ENCODE measurements at regions of chr16 and their contacts with region 1.

Region 1: GRCh38 chr16:87702325-87702811 is 63.4 kb downstream of the KLHDC4 start:
- DNase-seq: peak in 1 of 2 experiments; percentile 80
- H3K4me3 ChIP-seq: no peak overlapping the region
- H3K27ac ChIP-seq: no peak overlapping the region
- H3K4me1 ChIP-seq: peaks cover 0 to 3% (median 0%) of the 10 kb centered on the region in 4 experiments; a peak in 2 of 7 replicates
- H3K27me3 ChIP-seq: no peaks in the 10 kb centered on the region
- CTCF ChIP-seq: peak; percentile 77 to 80 (median 77)
- EP300 ChIP-seq: no peak
- POLR2A ChIP-seq: no peak
- RAD21 ChIP-seq: peak; percentile 46 to 58

Region 2: GRCh38 chr16:87492721-87493607 is 209.4 kb before region 1 on chr16 and contains the start of gene ZCCHC14:
- CTCF ChIA-PET with region 1: no interaction called
- POLR2A ChIA-PET with region 1: no interaction called
- DNase-seq: peak; percentile 90 to 100
- H3K4me3 ChIP-seq: peak within 1 kb of the TSS; percentile 37 to 60 (median 50)
- H3K27ac ChIP-seq: no peak within 1 kb of the TSS
- H3K4me1 ChIP-seq: peaks cover 6 to 17% (median 9%) of the 10 kb centered on the region in 4 experiments
- H3K27me3 ChIP-seq: no peaks in the 10 kb centered on the region; a peak in 1 of 7 replicates
- CTCF ChIP-seq: no peak
- EP300 ChIP-seq: peak in 1 of 2 experiments; percentile 17; a peak in 1 of 3 replicates
- POLR2A ChIP-seq: no peak
- RAD21 ChIP-seq: no peak; a peak in 1 of 4 replicates
- total RNA-seq, gene ZCCHC14: 27.1 and 28.2 TPM in 2 replicates

Region 3: DNA sequence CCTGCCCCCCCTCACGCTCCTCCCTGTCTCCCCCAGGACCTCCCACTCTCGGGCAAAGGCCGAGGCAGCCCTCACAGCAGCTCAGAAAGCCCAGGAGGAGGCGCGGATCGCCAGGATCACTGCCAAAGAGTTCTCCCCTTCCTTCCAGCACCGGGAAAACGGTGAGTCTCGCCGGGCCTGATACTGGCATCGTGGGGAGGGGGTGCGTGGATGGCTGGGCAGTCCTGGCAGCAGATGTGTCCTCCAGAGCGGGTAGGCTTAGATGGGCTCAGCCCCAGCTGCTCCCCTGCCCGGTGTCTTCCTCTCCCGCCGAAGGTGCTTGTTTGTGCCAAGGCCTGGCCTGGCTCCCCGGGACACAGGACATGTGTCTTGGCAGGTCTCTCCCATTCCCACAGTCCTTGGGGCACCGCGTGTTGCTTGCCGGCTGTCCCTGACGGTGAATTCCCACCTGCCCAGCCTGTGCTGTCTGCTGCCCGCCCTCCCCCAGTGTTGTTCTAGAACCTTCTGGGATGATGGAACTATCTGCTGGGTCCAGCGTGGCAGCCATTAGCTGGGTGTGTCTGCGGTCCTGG is 18.2 kb before region 1 on chr16:
- CTCF ChIA-PET with region 1: interaction called, 47 read pairs
- POLR2A ChIA-PET with region 1: no interaction called
- DNase-seq: no peak
- H3K4me3 ChIP-seq: no peak overlapping the region
- H3K27ac ChIP-seq: no peak overlapping the region; the same call in 1 of the 2 replicates
- H3K4me1 ChIP-seq: no peaks in the 10 kb centered on the region
- H3K27me3 ChIP-seq: no peaks in the 10 kb centered on the region
- CTCF ChIP-seq: no peak
- EP300 ChIP-seq: no peak
- POLR2A ChIP-seq: no peak
- RAD21 ChIP-seq: no peak

Region 4: DNA sequence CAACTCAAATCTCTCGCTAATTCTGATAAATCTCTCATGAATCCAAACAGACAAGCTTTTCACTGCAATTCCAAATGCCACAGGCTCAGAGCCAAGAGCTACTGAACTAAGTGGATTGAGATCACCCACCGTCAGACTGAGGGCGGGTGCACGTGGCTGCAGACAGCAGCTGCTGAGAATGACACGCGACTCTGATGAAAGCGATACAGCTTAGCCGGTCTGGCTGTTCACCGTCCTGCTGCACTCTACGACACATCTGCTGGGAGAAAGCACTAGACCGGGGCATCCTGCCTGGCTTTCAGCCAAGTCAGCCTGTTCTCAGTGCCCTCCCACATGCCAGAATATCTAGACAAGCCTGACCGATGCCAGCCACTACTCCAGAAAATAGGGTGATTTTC is 20.9 kb after region 1 on chr16:
- CTCF ChIA-PET with region 1: interaction called, 14 read pairs
- POLR2A ChIA-PET with region 1: no interaction called
- DNase-seq: no peak
- H3K4me3 ChIP-seq: no peak overlapping the region
- H3K27ac ChIP-seq: no peak overlapping the region
- H3K4me1 ChIP-seq: no peaks in the 10 kb centered on the region
- H3K27me3 ChIP-seq: no peaks in the 10 kb centered on the region
- CTCF ChIP-seq: no peak
- EP300 ChIP-seq: no peak
- POLR2A ChIP-seq: no peak
- RAD21 ChIP-seq: no peak

Measured in H1 (cell line).